Sigmoid colon (tissue), 7 donors: ENCODE measurements at regions of chr17 and their contacts with region 1.

Region 1: GRCh38 chr17:996554-997344 is at the start of gene TIMM22:
- DNase-seq: peak; percentile 95
- H3K4me3 ChIP-seq: peak within 1 kb of the TSS; percentile 61 to 99 (median 92)
- H3K27ac ChIP-seq: peak within 1 kb of the TSS; percentile 77 to 92 (median 88)
- H3K4me1 ChIP-seq: peaks cover 0 to 49% (median 41%) of the 10 kb centered on the region in 4 donors
- H3K27me3 ChIP-seq: no peaks in the 10 kb centered on the region
- CTCF ChIP-seq: peak; percentile 90 to 96 (median 94)
- EP300 ChIP-seq: no peak
- POLR2A ChIP-seq: peak; percentile 80 to 85
- total RNA-seq, gene TIMM22: 8.0 to 13.6 (median 11.0) TPM

Region 2: DNA sequence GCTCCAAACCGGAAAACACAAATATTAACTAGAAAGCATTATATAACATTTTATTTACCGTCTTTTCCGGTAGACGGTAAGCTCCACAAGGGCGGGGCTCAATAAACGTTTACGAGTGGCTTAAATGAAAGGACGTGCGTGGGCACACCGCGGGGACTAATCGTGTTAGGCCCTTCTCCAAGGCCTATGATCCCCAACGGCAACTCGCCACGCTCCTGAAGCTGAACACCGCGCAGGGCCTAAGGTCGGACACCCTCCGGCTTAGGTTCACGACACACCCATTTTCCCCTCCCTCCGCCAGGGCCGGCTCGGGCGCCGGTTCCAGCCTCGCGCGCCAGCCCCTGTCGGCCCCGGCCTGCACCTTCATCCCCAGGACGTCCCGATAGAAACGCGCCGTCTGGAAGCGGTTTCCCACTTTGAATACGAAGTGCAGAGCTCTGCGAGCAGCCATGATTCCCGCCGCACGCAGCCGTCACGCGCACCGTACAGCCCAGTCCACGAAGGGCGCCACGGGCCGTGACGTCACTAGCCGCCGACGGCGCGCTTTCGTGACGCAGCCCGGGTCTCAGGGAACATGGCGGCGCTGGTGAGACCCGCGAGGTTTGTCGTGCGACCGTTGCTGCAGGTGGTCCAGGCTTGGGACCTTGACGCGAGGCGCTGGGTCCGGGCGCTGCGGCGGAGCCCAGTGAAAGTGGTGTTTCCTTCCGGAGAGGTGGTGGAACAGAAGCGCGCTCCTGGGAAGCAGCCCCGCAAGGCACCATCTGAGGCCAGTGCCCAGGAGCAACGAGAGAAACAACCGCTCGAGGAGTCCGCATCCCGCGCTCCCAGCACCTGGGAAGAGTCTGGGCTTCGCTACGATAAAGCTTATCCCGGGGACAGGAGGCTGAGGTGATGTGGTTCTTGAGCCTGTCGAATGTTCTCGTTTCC is 214.7 kb before region 1 on chr17 and contains the starts of genes GLOD4 and MRM3:
- intact Hi-C with region 1: loop called (anchors 5 kb)
- DNase-seq: peak; percentile 96
- H3K4me3 ChIP-seq: peak within 1 kb of the TSS; percentile 65 to 91 (median 82)
- H3K27ac ChIP-seq: peak within 1 kb of the TSS; percentile 80 to 87 (median 86)
- H3K4me1 ChIP-seq: peaks cover 0 to 29% (median 27%) of the 10 kb centered on the region in 4 donors
- H3K27me3 ChIP-seq: no peaks in the 10 kb centered on the region
- CTCF ChIP-seq: no peak
- EP300 ChIP-seq: peak in 2 of 4 donors; percentile 44 to 74
- POLR2A ChIP-seq: peak; percentile 67 to 71
- total RNA-seq, gene GLOD4: 28.8 to 42.7 (median 35.7) TPM
- total RNA-seq, gene MRM3: 11.0 to 22.4 (median 18.0) TPM

Region 3: DNA sequence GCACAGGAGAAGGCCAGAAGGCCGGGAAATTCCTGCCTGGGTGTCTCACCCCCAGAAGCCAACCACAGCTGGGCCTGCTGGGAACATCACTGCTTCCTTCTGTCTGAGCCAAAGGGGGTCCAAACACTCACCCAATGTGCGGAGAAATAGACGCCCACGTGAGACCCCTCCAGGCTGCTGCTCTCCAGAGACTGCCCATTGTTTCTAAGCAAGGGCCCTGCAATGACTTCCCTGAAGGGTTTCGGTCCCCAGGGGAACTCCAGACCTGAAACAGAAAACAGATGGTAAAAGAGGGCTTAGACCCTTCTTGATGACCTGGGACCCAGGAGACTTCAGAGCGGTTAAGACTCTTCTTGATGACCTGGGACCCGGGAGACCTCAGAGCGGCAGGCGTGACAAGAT is 173.2 kb before region 1 on chr17:
- intact Hi-C with region 1: no loop called
- DNase-seq: no peak
- H3K4me3 ChIP-seq: no peak overlapping the region
- H3K27ac ChIP-seq: no peak overlapping the region
- H3K4me1 ChIP-seq: no peaks in the 10 kb centered on the region
- H3K27me3 ChIP-seq: no peaks in the 10 kb centered on the region
- CTCF ChIP-seq: no peak
- EP300 ChIP-seq: no peak
- POLR2A ChIP-seq: no peak

Region 4: DNA sequence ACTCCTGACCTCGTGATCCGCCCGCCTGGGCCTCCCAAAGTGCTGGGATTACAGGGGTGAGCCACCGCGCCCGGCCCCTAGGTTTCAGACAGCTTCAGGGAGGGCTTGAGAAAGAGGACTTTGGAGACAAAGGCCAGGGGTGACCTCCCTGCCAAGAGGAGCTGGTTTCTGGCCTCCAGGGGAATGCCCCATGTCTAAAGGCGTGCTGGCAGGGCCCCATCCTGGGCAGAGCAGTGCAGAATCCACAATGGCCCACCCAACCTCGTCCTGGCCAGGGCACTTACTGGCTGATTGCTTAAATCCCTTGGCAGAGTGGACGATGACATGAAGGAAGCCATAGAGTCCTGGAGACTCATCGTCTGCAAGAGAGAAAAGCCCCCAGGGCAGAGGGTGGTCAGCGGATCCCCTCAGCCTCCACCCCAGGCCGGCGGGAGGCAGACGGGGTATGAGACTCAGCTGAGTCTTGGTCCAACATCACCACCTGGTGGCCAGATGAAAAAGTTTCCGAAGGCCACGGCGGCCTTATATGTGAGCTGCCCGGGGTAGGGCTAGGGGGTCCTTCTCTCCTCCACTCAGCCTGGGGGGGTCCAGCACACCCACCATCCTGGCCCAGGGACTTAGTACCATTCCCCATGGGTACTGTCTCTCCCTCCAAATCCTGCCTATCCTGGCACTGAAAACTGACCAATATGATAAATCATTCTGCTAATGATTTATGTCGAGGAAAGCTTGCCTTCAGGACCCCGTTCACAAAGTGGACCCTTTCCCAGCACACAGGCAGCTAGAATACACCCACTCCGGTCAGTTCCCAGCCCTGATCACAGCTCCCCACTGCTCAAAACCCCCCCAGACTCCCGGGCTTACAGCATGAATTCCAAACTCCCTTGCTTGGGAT is 59.2 kb after region 1 on chr17:
- intact Hi-C with region 1: loop called (anchors 1 kb)
- DNase-seq: peak; percentile 85
- H3K4me3 ChIP-seq: no peak overlapping the region
- H3K27ac ChIP-seq: peak overlapping the region in 1 of 4 donors; percentile 16
- H3K4me1 ChIP-seq: peaks cover 0 to 11% (median 5%) of the 10 kb centered on the region in 4 donors
- H3K27me3 ChIP-seq: no peaks in the 10 kb centered on the region
- CTCF ChIP-seq: peak; percentile 58 to 84 (median 76)
- EP300 ChIP-seq: no peak
- POLR2A ChIP-seq: no peak